Endothelial cell of umbilical vein (primary cell): ENCODE measurements at regions of chr4 and their contacts with region 1.

Region 1: DNA sequence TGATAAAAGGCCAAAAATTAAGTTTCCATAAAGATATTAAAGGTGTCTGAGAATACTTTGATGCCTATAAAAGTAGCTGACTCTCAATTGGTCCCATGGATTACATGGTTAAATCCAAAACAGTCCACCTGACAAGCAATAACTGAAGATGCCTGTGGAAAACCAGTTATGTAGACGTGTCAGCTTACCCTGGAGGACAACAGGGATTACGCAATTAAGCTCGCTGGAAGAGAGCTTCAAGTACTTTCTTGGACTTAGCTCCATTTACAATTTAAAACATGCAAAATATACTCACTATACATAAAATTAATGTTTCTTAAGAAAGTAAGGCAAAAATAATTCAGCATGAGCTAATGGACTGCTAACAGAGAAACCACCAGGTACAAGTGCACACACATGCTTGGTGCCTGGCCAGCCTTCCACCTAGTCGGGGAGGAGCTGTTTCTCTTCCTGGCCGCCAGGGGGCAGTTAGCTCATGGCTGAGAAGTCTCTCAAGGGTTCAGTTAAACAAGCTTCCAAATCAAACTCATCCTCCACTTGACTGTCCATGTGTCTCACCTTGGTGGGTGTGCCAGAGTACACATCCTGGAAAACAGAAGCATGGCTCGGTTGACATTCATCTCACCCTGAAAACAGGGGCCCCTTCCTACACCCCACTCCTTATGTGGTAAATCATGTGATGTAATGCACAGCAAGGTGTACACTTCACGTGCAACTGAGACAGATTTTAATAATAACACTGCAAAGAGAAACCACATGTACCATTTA is 9.2 kb upstream of the FAM53A start:
- DNase-seq: peak; percentile 78
- H3K4me3 ChIP-seq: no peak overlapping the region
- H3K27ac ChIP-seq: no peak overlapping the region
- H3K4me1 ChIP-seq: no peaks in the 10 kb centered on the region
- H3K27me3 ChIP-seq: no peaks in the 10 kb centered on the region
- CTCF ChIP-seq: peak; percentile 94 to 95
- POLR2A ChIP-seq: no peak

Region 2: GRCh38 chr4:1706358-1706757 is 13.0 kb after region 1 on chr4:
- CTCF ChIA-PET with region 1: interaction called, 53 read pairs
- POLR2A ChIA-PET with region 1: interaction called, 4 read pairs
- dilution Hi-C with region 1: no loop called
- intact Hi-C with region 1: no loop called
- DNase-seq: no peak
- H3K4me3 ChIP-seq: no peak overlapping the region
- H3K27ac ChIP-seq: no peak overlapping the region
- H3K4me1 ChIP-seq: peaks cover 10% of the 10 kb centered on the region
- H3K27me3 ChIP-seq: no peaks in the 10 kb centered on the region
- CTCF ChIP-seq: no peak
- POLR2A ChIP-seq: no peak

Region 3: GRCh38 chr4:1712216-1713002 is 19.1 kb after region 1 on chr4 and contains the start of gene SLBP:
- CTCF ChIA-PET with region 1: interaction called, 49 read pairs
- POLR2A ChIA-PET with region 1: interaction called, 5 read pairs
- dilution Hi-C with region 1: no loop called
- intact Hi-C with region 1: no loop called
- DNase-seq: peak; percentile 86
- H3K4me3 ChIP-seq: peak within 1 kb of the TSS; percentile 60 to 73 (median 62)
- H3K27ac ChIP-seq: peak within 1 kb of the TSS; percentile 98
- H3K4me1 ChIP-seq: peaks cover 16% of the 10 kb centered on the region
- H3K27me3 ChIP-seq: no peaks in the 10 kb centered on the region
- CTCF ChIP-seq: no peak
- POLR2A ChIP-seq: peak; percentile 66
- total RNA-seq, gene SLBP: 62.7 and 63.1 TPM in 2 replicates

Region 4: DNA sequence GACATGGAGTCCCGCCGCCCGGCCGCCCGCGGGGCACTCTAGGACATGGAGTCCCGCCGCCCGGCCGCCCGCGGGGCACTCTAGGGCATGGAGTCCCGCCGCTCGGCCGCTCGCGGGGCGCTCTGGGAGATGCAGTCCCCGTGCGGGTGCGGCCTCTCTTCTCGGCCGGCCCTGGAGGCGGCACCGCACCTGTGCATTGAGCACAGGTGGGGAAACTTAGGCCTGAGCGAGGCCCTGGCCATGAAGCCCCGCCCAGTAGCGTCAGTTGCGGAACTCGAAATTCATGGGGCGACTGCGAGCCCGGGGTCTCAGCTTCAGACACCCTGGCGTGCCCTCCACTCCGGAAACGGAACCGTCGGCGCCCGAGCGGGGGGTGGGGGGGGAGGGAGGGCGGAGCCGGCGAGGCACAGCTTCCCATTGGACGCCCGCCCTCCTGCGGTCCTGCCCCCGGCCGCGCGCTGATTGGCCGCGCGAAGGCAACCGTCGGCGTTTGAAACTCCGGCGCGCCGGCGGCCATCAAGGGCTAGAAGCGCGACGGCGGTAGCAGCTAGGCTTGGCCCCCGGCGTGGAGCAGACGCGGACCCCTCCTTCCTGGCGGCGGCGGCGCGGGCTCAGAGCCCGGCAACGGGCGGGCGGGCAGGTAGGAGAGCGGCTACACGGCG is 27.8 kb after region 1 on chr4 and contains the starts of genes TACC3 and TMEM129:
- CTCF ChIA-PET with region 1: interaction called, 347 read pairs
- POLR2A ChIA-PET with region 1: interaction called, 4 read pairs
- dilution Hi-C with region 1: no loop called
- intact Hi-C with region 1: loop called (anchors 1 kb)
- DNase-seq: peak; percentile 88
- H3K4me3 ChIP-seq: peak within 1 kb of the TSS; percentile 54 to 73 (median 68)
- H3K27ac ChIP-seq: peak within 1 kb of the TSS; percentile 37
- H3K4me1 ChIP-seq: peaks cover 20% of the 10 kb centered on the region
- H3K27me3 ChIP-seq: no peaks in the 10 kb centered on the region
- CTCF ChIP-seq: no peak
- POLR2A ChIP-seq: no peak
- total RNA-seq, gene TACC3: 123 and 135 TPM in 2 replicates
- total RNA-seq, gene TMEM129: 23.2 and 24.8 TPM in 2 replicates

Region 5: GRCh38 chr4:1726146-1726934 is 33.0 kb after region 1 on chr4:
- CTCF ChIA-PET with region 1: interaction called, 347 read pairs
- POLR2A ChIA-PET with region 1: interaction called, 4 read pairs
- dilution Hi-C with region 1: no loop called
- intact Hi-C with region 1: loop called (anchors 1 kb)
- DNase-seq: peak; percentile 93
- H3K4me3 ChIP-seq: no peak overlapping the region
- H3K27ac ChIP-seq: peak overlapping the region; percentile 70
- H3K4me1 ChIP-seq: peaks cover 47% of the 10 kb centered on the region
- H3K27me3 ChIP-seq: no peaks in the 10 kb centered on the region
- CTCF ChIP-seq: peak; percentile 97 to 98
- POLR2A ChIP-seq: no peak

Region 6: GRCh38 chr4:1746265-1746691 is 53.0 kb after region 1 on chr4:
- CTCF ChIA-PET with region 1: interaction called, 13 read pairs
- POLR2A ChIA-PET with region 1: no interaction called
- dilution Hi-C with region 1: no loop called
- intact Hi-C with region 1: no loop called
- DNase-seq: peak; percentile 75
- H3K4me3 ChIP-seq: no peak overlapping the region
- H3K27ac ChIP-seq: no peak overlapping the region
- H3K4me1 ChIP-seq: peaks cover 4% of the 10 kb centered on the region
- H3K27me3 ChIP-seq: no peaks in the 10 kb centered on the region
- CTCF ChIP-seq: peak; percentile 93 to 96
- POLR2A ChIP-seq: no peak

Region 7: DNA sequence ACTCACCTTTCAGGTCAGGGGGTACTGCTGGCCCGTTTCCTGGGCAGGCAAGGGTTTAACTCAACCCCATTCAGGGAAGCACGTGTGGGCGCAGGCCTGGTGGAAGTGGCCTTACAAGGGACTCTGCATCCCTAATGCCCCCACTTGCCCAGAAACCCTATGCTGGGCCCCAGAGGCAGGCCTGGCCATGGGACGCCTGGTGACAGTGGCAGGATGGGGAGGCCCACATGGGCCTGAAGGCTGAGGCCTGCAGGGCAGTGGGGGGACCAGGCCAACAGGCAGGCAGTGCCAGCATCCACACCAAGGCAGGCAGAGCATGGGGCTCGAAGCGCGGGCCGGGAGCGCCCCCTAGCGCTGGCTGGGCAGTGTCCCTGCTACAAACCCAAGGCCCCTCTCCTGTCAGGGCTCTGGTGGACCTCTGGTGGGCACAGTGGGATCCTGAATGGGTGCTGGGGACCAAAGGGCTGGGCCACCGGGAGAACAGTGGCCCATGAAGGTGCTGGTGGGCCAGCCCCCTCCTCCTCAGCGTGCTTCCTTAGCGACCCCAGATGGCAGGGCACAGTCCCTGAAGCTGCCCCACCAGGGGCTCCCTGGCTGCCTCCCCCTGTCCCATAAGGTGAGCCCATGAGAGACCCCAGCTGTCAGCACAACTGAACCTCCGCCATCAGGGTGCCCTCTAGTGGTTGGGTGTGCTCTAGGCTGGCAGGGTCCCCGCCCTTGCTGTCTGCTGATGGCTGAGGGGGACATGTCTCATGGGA is 116.6 kb after region 1 on chr4:
- CTCF ChIA-PET with region 1: interaction called, 18 read pairs
- POLR2A ChIA-PET with region 1: no interaction called
- dilution Hi-C with region 1: no loop called
- intact Hi-C with region 1: loop called (anchors 1 kb)
- DNase-seq: peak; percentile 66
- H3K4me3 ChIP-seq: no peak overlapping the region
- H3K27ac ChIP-seq: no peak overlapping the region
- H3K4me1 ChIP-seq: no peaks in the 10 kb centered on the region
- H3K27me3 ChIP-seq: no peaks in the 10 kb centered on the region
- CTCF ChIP-seq: peak; percentile 97 to 99
- POLR2A ChIP-seq: no peak